Endothelial cell of umbilical vein (primary cell): ENCODE measurements at regions of chr5 and their contacts with region 1.

Region 1: DNA sequence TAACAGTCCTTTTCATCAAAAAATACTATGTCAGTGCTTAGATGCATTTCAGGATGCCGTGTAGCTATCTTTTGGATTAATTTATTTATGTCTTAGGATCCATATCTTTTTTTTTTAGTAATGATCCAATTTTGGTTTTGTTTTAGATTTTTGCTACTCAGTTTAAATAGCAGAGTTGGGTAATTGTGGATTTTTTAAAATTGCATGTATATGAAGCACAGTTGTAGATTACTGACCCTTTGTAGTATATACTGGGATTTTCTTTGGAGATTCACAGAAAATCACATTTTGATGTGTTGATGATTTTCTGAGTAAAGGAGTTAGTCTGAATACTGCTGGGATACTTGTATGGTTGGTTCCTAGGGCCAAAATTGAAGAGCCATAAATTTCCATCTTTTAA is 111.8 kb downstream of the NIPBL start:
- DNase-seq: no peak
- H3K4me3 ChIP-seq: no peak overlapping the region
- H3K27ac ChIP-seq: no peak overlapping the region
- H3K4me1 ChIP-seq: no peaks in the 10 kb centered on the region
- H3K27me3 ChIP-seq: no peaks in the 10 kb centered on the region
- CTCF ChIP-seq: no peak
- POLR2A ChIP-seq: no peak

Region 2: DNA sequence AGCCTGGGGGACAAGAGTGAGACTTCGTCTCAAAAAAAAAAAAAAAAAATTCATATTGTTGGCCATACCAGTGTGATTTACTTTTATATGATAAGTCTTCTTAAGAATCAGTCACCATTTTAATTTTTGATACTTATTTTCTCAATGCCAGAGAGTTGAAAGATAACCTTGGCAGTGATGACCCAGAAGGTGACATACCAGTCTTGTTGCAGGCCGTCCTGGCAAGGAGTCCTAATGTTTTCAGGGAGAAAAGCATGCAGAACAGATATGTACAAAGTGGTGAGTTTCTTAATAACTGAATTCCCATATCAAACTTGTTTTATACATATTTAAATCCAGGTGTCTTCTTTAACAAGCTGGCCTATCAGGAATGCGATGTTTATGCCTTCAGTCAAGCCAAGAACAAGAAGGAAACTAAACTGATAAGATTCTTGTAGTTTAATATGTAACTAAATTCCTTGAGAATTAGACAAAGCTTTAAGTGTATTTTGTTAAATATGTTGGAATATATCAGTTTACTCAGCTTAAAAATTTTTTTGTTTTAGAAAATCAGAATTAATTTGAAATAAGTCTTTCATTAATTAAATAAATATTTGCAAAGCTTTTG is 30.3 kb before region 1 on chr5:
- CTCF ChIA-PET with region 1: no interaction called
- POLR2A ChIA-PET with region 1: interaction called, 10 read pairs
- dilution Hi-C with region 1: no loop called
- intact Hi-C with region 1: no loop called
- DNase-seq: no peak
- H3K4me3 ChIP-seq: no peak overlapping the region
- H3K27ac ChIP-seq: no peak overlapping the region
- H3K4me1 ChIP-seq: no peaks in the 10 kb centered on the region
- H3K27me3 ChIP-seq: no peaks in the 10 kb centered on the region
- CTCF ChIP-seq: no peak
- POLR2A ChIP-seq: no peak